B cell (primary cell): ENCODE measurements at regions of chr2 and their contacts with region 1.

Region 1: DNA sequence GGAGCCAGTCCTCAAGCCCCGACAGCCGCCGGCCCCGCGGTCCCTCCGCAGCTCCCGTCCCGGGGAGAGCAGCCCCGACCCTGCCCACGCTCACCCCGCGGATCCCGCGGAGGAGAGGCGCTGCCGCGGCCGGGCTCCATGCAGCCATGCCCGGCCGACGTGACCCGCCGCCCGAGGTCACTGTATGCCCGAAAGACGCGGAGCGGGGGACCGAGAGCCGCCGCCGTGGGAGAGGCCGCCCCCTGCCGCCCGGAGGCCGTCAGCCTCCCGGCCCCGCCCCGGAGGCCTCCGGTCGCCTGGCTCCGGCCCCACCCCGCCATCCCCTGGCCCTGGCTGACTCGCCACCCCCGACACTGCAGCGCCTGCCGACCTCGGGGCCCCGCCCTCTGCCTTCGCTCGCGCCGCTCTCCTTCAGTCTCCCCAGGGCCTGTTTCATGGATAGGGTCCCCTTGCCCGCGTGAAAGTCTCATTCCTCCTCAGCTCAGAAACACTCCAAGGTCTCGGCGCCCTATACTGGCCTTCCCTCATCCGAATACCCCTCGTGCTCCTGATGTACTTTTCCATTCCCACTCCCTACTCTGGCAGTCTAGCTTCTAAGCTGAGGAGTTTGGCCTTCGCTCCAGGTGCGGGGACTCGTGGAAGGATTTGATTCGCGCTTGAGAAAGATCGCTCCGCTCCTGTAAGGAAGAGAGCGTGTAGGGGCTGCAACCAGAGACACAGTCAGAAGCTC is at the start of gene BOLA3:
- DNase-seq: peak; percentile 88
- ATAC-seq: peak; percentile 98
- H3K4me3 ChIP-seq: peak within 1 kb of the TSS; percentile 58 to 92 (median 67)
- H3K4me3 Mint-ChIP-seq: no peak within 1 kb of the TSS
- H3K27ac ChIP-seq: peak within 1 kb of the TSS; percentile 38 to 56
- H3K27ac Mint-ChIP-seq: no peak within 1 kb of the TSS
- H3K4me1 ChIP-seq: peaks cover 16 to 20% of the 10 kb centered on the region in 2 donors
- H3K4me1 Mint-ChIP-seq: peaks cover 9% of the 10 kb centered on the region
- H3K27me3 ChIP-seq: no peaks in the 10 kb centered on the region
- H3K27me3 Mint-ChIP-seq: no peaks in the 10 kb centered on the region
- CTCF ChIP-seq: peak; percentile 80
- total RNA-seq, gene BOLA3: 6.5 and 7.5 TPM in 2 replicates

Region 2: DNA sequence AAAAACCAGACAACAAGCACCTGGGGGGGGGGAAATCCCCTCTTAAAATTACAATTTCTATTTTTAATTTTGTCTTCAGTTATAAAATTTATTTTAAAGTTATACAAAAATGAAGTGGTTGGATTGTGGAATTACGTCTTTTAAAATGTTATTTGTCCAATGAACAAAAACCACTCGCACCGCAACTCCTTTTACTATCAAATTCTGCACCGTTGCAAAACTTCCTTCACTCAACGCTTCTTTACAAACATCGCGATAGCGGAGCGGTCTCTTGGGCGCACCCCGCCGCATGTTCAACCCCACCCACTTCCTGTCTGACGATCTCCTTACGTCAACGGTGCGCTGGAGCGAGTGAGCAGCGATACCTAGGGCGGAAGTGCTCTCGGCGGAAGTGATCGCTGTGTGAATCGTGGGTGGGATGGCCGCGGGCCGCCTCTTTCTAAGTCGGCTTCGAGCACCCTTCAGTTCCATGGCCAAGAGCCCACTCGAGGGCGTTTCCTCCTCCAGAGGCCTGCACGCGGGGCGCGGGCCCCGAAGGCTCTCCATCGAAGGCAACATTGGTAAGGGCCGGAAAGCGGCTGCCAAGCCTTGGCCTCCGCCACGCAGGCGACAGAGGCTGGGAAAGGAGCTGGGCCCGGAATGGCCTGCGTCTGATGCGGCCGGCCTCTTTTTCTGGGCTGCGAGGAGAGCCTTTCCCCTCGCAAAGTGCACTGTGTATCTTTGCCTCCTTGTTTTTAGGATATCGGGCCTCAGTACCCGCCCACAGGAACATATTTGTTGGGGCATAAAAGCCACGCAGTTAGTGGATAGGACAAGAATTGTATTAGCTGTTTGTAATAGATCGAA is 221.2 kb before region 1 on chr2 and contains the start of gene DGUOK:
- CTCF ChIA-PET with region 1: interaction called, 4 read pairs
- POLR2A ChIA-PET with region 1: interaction called, 3 read pairs
- intact Hi-C with region 1: loop called (anchors 1 kb)
- DNase-seq: peak; percentile 99
- ATAC-seq: peak; percentile 98
- H3K4me3 ChIP-seq: peak within 1 kb of the TSS; percentile 69 to 89 (median 76)
- H3K4me3 Mint-ChIP-seq: peak within 1 kb of the TSS; percentile 86
- H3K27ac ChIP-seq: peak within 1 kb of the TSS; percentile 95 to 99
- H3K27ac Mint-ChIP-seq: peak within 1 kb of the TSS; percentile 90
- H3K4me1 ChIP-seq: peaks cover 33 to 37% of the 10 kb centered on the region in 2 donors
- H3K4me1 Mint-ChIP-seq: peaks cover 61% of the 10 kb centered on the region
- H3K27me3 ChIP-seq: no peaks in the 10 kb centered on the region
- H3K27me3 Mint-ChIP-seq: no peaks in the 10 kb centered on the region
- CTCF ChIP-seq: no peak
- total RNA-seq, gene DGUOK: 61.7 and 65.4 TPM in 2 replicates

Region 3: GRCh38 chr2:74119912-74120825 is 27.7 kb before region 1 on chr2:
- CTCF ChIA-PET with region 1: interaction called, 17 read pairs
- POLR2A ChIA-PET with region 1: interaction called, 3 read pairs
- intact Hi-C with region 1: loop called (anchors 1 kb)
- DNase-seq: peak; percentile 91
- ATAC-seq: peak; percentile 96
- H3K4me3 ChIP-seq: peak overlapping the region; percentile 55 to 93 (median 88)
- H3K4me3 Mint-ChIP-seq: peak overlapping the region; percentile 91
- H3K27ac ChIP-seq: peak overlapping the region; percentile 85 to 88
- H3K27ac Mint-ChIP-seq: peak overlapping the region; percentile 94
- H3K4me1 ChIP-seq: peaks cover 0 to 11% of the 10 kb centered on the region in 2 donors
- H3K4me1 Mint-ChIP-seq: peaks cover 8% of the 10 kb centered on the region
- H3K27me3 ChIP-seq: peaks cover 0 to 2% (median 0%) of the 10 kb centered on the region in 4 experiments
- H3K27me3 Mint-ChIP-seq: peaks cover 2% of the 10 kb centered on the region
- CTCF ChIP-seq: peak; percentile 69

Region 4: DNA sequence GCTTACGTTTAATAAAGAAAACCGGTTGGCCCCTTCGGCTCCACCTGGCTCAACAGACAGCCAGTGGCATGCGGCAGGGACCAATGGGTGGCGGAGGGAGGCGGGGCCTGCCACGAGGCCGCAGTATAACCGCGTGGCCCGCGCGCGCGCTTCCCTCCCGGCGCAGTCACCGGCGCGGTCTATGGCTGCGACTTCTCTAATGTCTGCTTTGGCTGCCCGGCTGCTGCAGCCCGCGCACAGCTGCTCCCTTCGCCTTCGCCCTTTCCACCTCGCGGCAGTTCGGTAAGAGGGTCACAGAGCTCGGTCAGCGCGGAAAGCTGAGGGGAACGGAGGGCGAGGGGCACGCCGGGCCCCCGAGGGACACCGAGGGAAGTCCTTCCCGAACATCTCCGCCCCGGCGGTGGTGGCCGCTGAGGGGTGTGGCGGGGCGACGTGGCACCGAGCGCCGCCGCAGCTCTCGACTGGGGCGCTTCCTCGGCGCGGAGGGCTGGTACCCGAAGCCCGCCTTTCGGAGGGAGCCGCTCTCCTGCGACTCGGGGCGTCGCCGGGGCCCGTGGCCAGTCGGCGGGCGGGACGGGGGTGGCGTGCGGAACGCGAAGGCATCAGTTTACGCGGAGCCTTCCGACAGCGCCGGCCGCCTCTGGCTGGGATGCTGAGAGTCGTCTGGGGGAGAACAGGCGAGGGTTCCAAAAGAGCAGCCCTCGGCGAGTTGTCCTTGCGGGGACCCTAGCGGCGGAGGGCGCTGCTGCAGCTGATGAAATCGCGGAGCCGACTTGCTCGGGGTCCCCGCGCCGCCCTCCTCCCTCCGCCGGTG is 50.8 kb after region 1 on chr2 and contains the start of gene MTHFD2:
- CTCF ChIA-PET with region 1: interaction called, 16 read pairs
- POLR2A ChIA-PET with region 1: interaction called, 3 read pairs
- intact Hi-C with region 1: loop called (anchors 1 kb)
- DNase-seq: peak; percentile 94
- ATAC-seq: peak; percentile 87
- H3K4me3 ChIP-seq: peak within 1 kb of the TSS; percentile 30 to 79 (median 74)
- H3K4me3 Mint-ChIP-seq: peak within 1 kb of the TSS; percentile 98
- H3K27ac ChIP-seq: peak within 1 kb of the TSS; percentile 92 to 96
- H3K27ac Mint-ChIP-seq: peak within 1 kb of the TSS; percentile 99
- H3K4me1 ChIP-seq: peaks cover 14 to 23% of the 10 kb centered on the region in 2 donors
- H3K4me1 Mint-ChIP-seq: peaks cover 24% of the 10 kb centered on the region
- H3K27me3 ChIP-seq: no peaks in the 10 kb centered on the region
- H3K27me3 Mint-ChIP-seq: no peaks in the 10 kb centered on the region
- CTCF ChIP-seq: peak; percentile 93
- total RNA-seq, gene MTHFD2: 17.4 and 18.0 TPM in 2 replicates